ENCODE measurements at regions of chr15 and their contacts with region 1.

Region 1: GRCh38 chr15:45795440-45796069 is 160.7 kb downstream of the SQOR start:
- DNase-seq: peak; percentile 31 to 81
- H3K4me3 ChIP-seq: no peak overlapping the region
- H3K27ac ChIP-seq: no peak overlapping the region
- H3K4me1 ChIP-seq: no peaks in the 10 kb centered on the region
- H3K27me3 ChIP-seq: peaks cover 0 to 7% (median 0%) of the 10 kb centered on the region in 3 donors
- CTCF ChIP-seq: peak in 5 of 7 experiments; percentile 25 to 65 (median 51)
- EP300 ChIP-seq: no peak
- POLR2A ChIP-seq: no peak

Region 2: GRCh38 chr15:45705510-45706473 is 89.8 kb before region 1 on chr15:
- intact Hi-C with region 1: loop called (anchors 10 kb)
- DNase-seq: peak; percentile 80 to 96
- H3K4me3 ChIP-seq: peak overlapping the region; percentile 46 to 57 (median 54)
- H3K27ac ChIP-seq: peak overlapping the region in 3 of 5 donors; percentile 44 to 61 (median 53)
- H3K4me1 ChIP-seq: peaks cover 6 to 20% (median 16%) of the 10 kb centered on the region in 4 donors
- H3K27me3 ChIP-seq: peaks cover 0 to 13% (median 0%) of the 10 kb centered on the region in 3 donors
- CTCF ChIP-seq: peak in 6 of 7 experiments; percentile 38 to 92 (median 87)
- EP300 ChIP-seq: no peak
- POLR2A ChIP-seq: no peak

Region 3: DNA sequence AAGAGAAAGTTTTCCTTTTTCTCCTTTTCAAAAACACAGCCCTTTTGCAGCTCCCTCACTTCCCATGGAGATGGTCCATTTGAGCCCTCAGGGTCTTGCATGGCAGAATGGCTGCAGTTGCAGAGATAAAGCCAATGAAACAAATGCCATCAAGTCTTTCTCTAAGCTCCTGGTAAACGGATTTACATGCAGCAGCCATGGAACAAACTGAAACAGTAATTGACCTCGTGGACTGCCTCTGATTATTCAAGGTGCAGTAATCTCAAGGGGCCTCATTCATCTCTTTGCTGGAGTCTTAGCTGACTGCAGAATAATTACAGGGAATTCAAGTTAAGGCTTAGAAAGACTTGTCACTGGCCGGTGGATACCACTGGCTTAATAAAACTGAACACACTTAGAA is 35.6 kb before region 1 on chr15:
- intact Hi-C with region 1: no loop called
- DNase-seq: no peak
- H3K4me3 ChIP-seq: no peak overlapping the region
- H3K27ac ChIP-seq: no peak overlapping the region
- H3K4me1 ChIP-seq: no peaks in the 10 kb centered on the region
- H3K27me3 ChIP-seq: no peaks in the 10 kb centered on the region
- CTCF ChIP-seq: no peak
- EP300 ChIP-seq: no peak
- POLR2A ChIP-seq: no peak